PC-9 (cell line): ENCODE measurements at regions of chr11 and their contacts with region 1.

Region 1: DNA sequence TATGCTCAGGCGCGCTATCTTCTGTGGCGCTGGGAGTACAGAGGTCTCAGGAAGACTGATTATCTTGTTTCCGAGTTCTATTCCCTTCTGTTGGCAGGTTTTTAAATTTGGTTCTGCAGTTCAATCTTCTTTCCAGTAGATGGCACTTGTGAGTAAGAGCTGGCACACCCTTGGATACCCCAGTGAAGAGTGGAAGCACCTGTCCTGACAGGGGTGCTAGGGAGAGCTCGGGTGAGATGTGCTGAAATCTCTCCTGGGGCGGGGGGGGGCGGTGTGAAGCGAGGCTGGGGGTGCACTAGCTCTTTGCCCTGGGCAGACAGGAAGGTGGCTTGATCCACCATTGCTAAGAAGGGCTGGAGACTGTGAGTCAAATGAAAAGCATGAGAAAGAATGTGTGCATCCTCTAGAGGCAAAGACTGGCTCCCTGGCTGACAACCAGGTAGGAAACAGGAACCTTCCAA is 679.9 kb upstream of the CCDC179 start:
- DNase-seq: peak in 1 of 2 experiments; percentile 41
- H3K4me3 ChIP-seq: no peak overlapping the region
- H3K27ac ChIP-seq: no peak overlapping the region
- H3K4me1 ChIP-seq: no peaks in the 10 kb centered on the region
- H3K27me3 ChIP-seq: no peaks in the 10 kb centered on the region
- CTCF ChIP-seq: peak; percentile 74

Region 2: DNA sequence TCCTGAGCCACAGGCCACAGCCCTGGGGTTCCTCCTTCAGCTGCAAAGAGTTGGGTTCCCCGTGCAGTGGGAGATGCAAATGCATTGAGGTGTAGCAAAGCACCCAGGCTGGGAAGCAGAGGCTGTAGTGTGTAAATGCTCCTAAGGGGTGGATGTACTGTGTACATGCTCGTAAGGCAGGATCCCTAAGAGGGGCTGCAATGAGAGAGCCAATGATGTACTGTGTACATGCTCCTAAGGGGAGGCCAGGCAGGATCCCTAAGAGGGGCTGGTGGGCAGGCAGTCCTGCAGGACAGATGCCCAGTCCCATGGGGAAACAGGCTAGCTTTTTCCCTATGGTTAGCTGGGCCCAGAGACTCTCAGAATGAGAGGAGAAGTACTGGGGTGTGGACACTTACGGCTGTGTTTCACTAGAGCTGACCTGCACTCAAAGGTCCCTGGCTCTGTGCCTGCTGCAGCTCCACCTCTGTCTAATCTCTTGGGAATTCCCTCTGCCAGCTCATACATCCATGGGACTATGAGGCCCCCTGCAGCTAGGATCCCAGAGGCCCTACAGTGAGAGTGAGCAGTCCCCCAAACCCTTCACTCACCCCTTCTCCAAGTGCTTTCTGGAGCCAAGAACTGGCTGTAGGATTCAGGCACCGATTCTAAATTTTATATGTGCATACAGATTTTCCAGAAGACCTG is 694.8 kb after region 1 on chr11:
- CTCF ChIA-PET with region 1: no interaction called
- POLR2A ChIA-PET with region 1: no interaction called
- intact Hi-C with region 1: loop called (anchors 1 kb)
- DNase-seq: peak in 1 of 2 experiments; percentile 16
- H3K4me3 ChIP-seq: no peak overlapping the region
- H3K27ac ChIP-seq: no peak overlapping the region
- H3K4me1 ChIP-seq: no peaks in the 10 kb centered on the region
- H3K27me3 ChIP-seq: no peaks in the 10 kb centered on the region
- CTCF ChIP-seq: no peak